Activated CD4-positive, alpha-beta T cell treated with anti-CD3 and anti-CD28 coated beads, Interleukin-2, amount 10 ng/mL, durations not matched to agents 24 days and 14 days (primary cell): ENCODE measurements at regions of chr3 and their contacts with region 1.

Region 1: DNA sequence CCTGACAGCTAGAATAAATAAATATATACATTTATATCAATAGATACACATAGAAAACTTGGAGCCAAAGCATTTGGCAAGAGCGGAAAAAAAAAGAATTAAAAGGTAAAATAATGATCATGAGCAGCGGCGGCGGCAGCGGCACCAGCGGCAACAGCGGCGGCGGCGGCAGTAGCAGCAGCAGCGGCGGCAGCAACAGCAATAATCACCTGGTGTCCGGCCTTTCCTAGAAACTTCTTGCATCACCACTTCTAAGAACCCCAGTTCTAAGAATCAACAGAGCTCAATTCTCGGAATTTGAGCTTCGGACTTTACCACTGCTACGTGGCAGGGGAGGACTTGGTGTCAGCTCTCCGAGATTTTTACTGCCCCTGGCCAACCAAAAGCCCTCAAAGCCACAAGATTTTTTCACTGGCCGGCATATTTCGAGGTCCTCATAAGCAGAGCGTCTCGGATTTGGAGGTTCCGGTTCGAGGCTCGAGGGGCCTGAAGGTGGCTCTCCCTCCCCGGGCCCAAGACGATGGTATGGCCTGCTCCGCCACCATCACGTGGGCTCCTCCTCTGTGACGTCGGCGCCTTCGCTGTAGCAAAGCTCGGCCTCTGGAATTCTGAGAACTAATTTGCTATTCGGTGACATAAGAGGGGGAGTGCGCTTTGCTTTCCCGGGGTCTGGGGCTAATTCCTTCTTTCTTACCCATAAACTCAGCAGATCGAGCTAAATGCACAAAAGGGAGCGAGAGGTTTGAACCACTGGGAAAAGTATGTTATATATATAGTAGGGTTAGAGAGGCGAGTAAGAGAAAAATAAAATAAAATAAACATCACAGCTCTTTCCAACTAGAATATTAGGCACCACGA is at the start of gene BCL6:
- DNase-seq: peak; percentile 97
- H3K4me3 Mint-ChIP-seq: peak within 1 kb of the TSS; percentile 98
- H3K27ac Mint-ChIP-seq: peak within 1 kb of the TSS; percentile 99
- H3K4me1 Mint-ChIP-seq: peaks cover 61% of the 10 kb centered on the region
- H3K27me3 Mint-ChIP-seq: no peaks in the 10 kb centered on the region
- total RNA-seq, gene BCL6: 41.7 and 51.7 TPM in 2 replicates

Region 2: GRCh38 chr3:187777331-187777941 is 32.0 kb after region 1 on chr3:
- intact Hi-C with region 1: loop called (anchors 1 kb)
- DNase-seq: peak; percentile 82
- H3K4me3 Mint-ChIP-seq: peak overlapping the region; percentile 58
- H3K27ac Mint-ChIP-seq: peak overlapping the region; percentile 93
- H3K4me1 Mint-ChIP-seq: peaks cover 48% of the 10 kb centered on the region
- H3K27me3 Mint-ChIP-seq: no peaks in the 10 kb centered on the region

Region 3: GRCh38 chr3:187870360-187871203 is 125.2 kb after region 1 on chr3:
- intact Hi-C with region 1: loop called (anchors 1 kb)
- DNase-seq: no peak
- H3K4me3 Mint-ChIP-seq: no peak overlapping the region
- H3K27ac Mint-ChIP-seq: peak overlapping the region; percentile 90
- H3K4me1 Mint-ChIP-seq: peaks cover 24% of the 10 kb centered on the region
- H3K27me3 Mint-ChIP-seq: no peaks in the 10 kb centered on the region

Region 4: DNA sequence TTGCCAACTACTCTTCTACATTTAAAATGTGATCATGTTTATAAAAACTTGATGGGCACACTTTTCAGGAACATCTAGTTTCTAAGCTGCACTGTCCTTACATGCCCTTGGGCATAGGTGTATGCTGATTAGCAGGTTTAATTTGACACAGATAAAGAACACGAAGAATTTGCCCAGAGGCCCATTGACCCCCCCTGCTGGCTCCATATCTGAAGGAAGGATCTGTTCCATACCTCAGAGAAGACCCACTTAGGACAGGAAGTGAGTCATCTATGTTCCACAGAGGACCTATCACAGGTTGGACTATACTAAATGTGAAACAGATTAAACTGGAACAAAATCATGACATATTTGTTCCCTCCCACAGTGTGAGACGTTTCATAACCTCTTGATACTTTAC is 315.7 kb after region 1 on chr3:
- intact Hi-C with region 1: loop called (anchors 1 kb)
- DNase-seq: peak; percentile 85
- H3K4me3 Mint-ChIP-seq: peak overlapping the region; percentile 66
- H3K27ac Mint-ChIP-seq: peak overlapping the region; percentile 88
- H3K4me1 Mint-ChIP-seq: peaks cover 32% of the 10 kb centered on the region
- H3K27me3 Mint-ChIP-seq: no peaks in the 10 kb centered on the region

Region 5: GRCh38 chr3:188170461-188171459 is 425.3 kb after region 1 on chr3:
- intact Hi-C with region 1: loop called (anchors 1 kb)
- DNase-seq: peak; percentile 79
- H3K4me3 Mint-ChIP-seq: peak overlapping the region; percentile 4
- H3K27ac Mint-ChIP-seq: peak overlapping the region; percentile 85
- H3K4me1 Mint-ChIP-seq: peaks cover 39% of the 10 kb centered on the region
- H3K27me3 Mint-ChIP-seq: no peaks in the 10 kb centered on the region

Region 6: GRCh38 chr3:188348435-188349244 is 603.2 kb after region 1 on chr3:
- intact Hi-C with region 1: no loop called
- DNase-seq: no peak
- H3K4me3 Mint-ChIP-seq: no peak overlapping the region
- H3K27ac Mint-ChIP-seq: no peak overlapping the region
- H3K4me1 Mint-ChIP-seq: peaks cover 3% of the 10 kb centered on the region
- H3K27me3 Mint-ChIP-seq: no peaks in the 10 kb centered on the region